ENCODE measurements at regions of chr19 and their contacts with region 1.

Region 1: GRCh38 chr19:51338563-51339312 is 3.2 kb downstream of the VSIG10L start:
- DNase-seq: peak; percentile 83 to 85
- ATAC-seq: peak; percentile 70 to 84 (median 74)
- H3K4me3 ChIP-seq: peak overlapping the region; percentile 65
- H3K27ac ChIP-seq: no peak overlapping the region
- H3K4me1 ChIP-seq: no peaks in the 10 kb centered on the region
- H3K27me3 ChIP-seq: no peaks in the 10 kb centered on the region
- CTCF ChIP-seq: peak; percentile 84

Region 2: GRCh38 chr19:51439021-51439465 is 100.3 kb after region 1 on chr19:
- intact Hi-C with region 1: loop called (anchors 5 kb)
- DNase-seq: no peak
- ATAC-seq: no peak
- H3K4me3 ChIP-seq: no peak overlapping the region
- H3K27ac ChIP-seq: no peak overlapping the region
- H3K4me1 ChIP-seq: no peaks in the 10 kb centered on the region
- H3K27me3 ChIP-seq: peaks cover 0 to 21% (median 2%) of the 10 kb centered on the region in 3 donors
- CTCF ChIP-seq: peak; percentile 10

Region 3: GRCh38 chr19:51570962-51571575 is 232.3 kb after region 1 on chr19 and contains the start of gene ZNF175:
- intact Hi-C with region 1: loop called in 1 of 2 experiments (anchors 5 kb)
- DNase-seq: peak; percentile 96 to 97
- ATAC-seq: peak; percentile 99 to 100 (median 99)
- H3K4me3 ChIP-seq: peak within 1 kb of the TSS; percentile 81
- H3K27ac ChIP-seq: peak within 1 kb of the TSS; percentile 72
- H3K4me1 ChIP-seq: peaks cover 11% of the 10 kb centered on the region
- H3K27me3 ChIP-seq: peaks cover 0 to 13% (median 0%) of the 10 kb centered on the region in 3 donors
- CTCF ChIP-seq: no peak
- total RNA-seq, gene ZNF175: 4.4 to 8.9 (median 6.7) TPM

Region 4: DNA sequence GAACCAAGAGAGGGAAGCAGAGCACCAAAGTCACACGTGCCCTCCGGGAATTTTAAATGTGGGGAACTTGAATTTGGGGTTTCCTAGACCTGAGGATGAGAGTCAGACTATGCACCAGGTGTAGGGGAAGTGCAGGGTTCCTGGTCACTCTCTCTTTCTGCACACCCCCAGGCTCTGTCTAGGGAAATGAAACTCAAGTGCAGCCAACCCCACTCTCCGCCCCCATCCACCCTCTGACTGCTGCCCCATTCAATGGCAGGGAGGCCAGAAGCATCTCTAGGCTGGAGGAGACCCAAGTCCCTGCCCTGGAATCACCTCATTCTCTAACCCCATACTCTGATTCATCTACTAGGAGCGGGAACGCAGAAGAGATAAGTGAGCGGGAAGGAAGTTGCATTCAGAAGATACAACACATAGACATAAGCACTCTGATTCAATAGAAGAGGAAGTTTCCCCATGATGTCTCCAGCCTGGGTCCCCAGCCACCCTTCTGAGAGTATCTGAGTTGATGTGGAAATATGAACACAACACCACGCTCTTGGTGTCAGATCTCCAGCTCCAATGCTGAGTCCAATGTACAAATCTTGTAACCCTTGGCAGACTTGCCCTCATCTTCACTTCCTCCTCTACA is 312.6 kb after region 1 on chr19:
- intact Hi-C with region 1: loop called in 1 of 2 experiments (anchors 5 kb)
- DNase-seq: no peak
- ATAC-seq: no peak
- H3K4me3 ChIP-seq: no peak overlapping the region
- H3K27ac ChIP-seq: no peak overlapping the region
- H3K4me1 ChIP-seq: no peaks in the 10 kb centered on the region
- H3K27me3 ChIP-seq: peaks cover 0 to 4% (median 2%) of the 10 kb centered on the region in 3 donors
- CTCF ChIP-seq: no peak

Region 5: GRCh38 chr19:51784922-51785690 is 446.4 kb after region 1 on chr19:
- intact Hi-C with region 1: loop called in 1 of 2 experiments (anchors 5 kb)
- DNase-seq: peak; percentile 65 to 67
- ATAC-seq: peak in 2 of 4 donors; percentile 32 to 54
- H3K4me3 ChIP-seq: no peak overlapping the region
- H3K27ac ChIP-seq: no peak overlapping the region
- H3K4me1 ChIP-seq: no peaks in the 10 kb centered on the region
- H3K27me3 ChIP-seq: peaks cover 0 to 1% (median 0%) of the 10 kb centered on the region in 3 donors
- CTCF ChIP-seq: no peak